ENCODE measurements at regions of chr14 and their contacts with region 1.

Region 1: GRCh38 chr14:100239840-100240724 is 1.1 kb downstream of the YY1 start:
- DNase-seq: peak; percentile 78 to 89 (median 86)
- H3K4me3 ChIP-seq: peak overlapping the region; percentile 92
- H3K27ac ChIP-seq: peak overlapping the region; percentile 94 to 97
- H3K4me1 ChIP-seq: peaks cover 9% of the 10 kb centered on the region
- H3K27me3 ChIP-seq: no peaks in the 10 kb centered on the region
- CTCF ChIP-seq: peak; percentile 57 to 85 (median 84)
- EP300 ChIP-seq: no peak
- POLR2A ChIP-seq: peak; percentile 23

Region 2: DNA sequence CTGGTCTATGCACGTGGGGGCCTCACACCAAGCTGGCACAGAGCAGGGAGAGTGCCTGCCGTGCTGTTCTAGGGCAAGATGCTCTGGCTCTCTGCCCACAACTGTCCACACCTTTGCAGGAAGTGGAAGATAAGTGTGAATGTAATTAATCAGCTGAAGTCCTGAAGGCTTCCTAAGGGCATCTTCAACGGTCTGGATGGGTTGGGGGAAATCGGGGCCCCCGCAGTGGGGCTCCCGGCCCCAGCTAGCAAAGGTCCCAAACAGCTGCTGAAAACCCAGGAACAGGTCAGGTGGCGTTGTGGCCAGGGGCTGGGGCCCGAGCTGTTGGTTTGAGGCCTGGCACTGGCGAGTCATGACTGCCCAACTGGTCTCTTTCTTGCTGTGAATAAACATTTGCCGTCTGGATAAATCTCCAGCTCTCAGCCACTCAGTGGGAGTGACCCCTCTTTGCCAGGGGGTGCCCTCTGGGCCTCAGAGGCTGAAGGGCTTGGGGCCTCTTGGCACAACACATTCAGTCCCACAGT is 72.9 kb after region 1 on chr14:
- intact Hi-C with region 1: loop called in 1 of 4 experiments (anchors 5 kb)
- DNase-seq: no peak
- H3K4me3 ChIP-seq: no peak overlapping the region
- H3K27ac ChIP-seq: no peak overlapping the region
- H3K4me1 ChIP-seq: no peaks in the 10 kb centered on the region
- H3K27me3 ChIP-seq: no peaks in the 10 kb centered on the region
- CTCF ChIP-seq: no peak
- EP300 ChIP-seq: no peak
- POLR2A ChIP-seq: no peak